OCI-LY7 (cell line): ENCODE measurements at regions of chr12 and their contacts with region 1.

Region 1: DNA sequence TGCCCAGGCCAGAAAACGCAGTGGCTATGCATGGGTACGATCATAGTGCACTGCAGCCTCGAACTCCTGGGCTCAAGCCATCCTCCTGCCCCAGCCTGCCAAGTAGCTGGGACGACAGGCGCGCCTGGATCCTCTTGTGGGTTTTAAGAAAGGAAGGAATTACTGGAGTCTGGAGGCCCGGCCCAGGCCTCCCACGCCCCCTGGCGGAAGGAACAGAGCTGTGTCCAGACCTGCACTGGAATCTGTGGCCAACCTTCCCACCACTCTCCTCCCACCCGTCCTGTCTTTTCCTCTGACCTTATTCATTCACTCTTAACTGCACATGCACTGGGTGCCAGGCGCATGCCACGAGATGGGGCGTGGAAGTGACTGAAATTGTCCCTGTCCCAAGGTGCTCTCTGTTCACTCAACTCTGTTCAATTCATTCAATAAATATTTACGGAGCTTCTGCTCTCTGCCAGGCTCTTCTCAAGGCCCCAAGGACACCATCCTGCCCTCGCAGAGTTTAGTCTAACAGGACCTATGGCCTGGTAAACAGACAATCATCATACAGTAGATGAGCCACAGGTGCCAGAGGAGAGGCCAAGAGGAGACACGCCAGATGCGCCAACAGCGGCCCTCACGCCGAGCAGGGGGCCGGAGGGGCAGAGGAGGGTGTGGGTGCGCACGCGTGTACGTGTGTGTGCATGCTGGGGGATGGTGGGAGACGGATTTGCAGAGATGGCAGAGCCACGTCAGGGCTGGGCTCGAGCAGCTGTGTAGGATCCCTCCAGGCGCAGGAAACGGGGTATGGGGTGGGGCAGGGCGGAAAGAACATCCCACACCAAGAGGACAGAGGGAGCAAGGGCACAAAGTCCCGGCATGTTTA is 13.7 kb upstream of the TMEM106C start:
- DNase-seq: peak; percentile 66
- H3K4me3 ChIP-seq: no peak overlapping the region
- H3K27ac ChIP-seq: no peak overlapping the region
- H3K4me1 ChIP-seq: no peaks in the 10 kb centered on the region
- CTCF ChIP-seq: peak; percentile 95

Region 2: DNA sequence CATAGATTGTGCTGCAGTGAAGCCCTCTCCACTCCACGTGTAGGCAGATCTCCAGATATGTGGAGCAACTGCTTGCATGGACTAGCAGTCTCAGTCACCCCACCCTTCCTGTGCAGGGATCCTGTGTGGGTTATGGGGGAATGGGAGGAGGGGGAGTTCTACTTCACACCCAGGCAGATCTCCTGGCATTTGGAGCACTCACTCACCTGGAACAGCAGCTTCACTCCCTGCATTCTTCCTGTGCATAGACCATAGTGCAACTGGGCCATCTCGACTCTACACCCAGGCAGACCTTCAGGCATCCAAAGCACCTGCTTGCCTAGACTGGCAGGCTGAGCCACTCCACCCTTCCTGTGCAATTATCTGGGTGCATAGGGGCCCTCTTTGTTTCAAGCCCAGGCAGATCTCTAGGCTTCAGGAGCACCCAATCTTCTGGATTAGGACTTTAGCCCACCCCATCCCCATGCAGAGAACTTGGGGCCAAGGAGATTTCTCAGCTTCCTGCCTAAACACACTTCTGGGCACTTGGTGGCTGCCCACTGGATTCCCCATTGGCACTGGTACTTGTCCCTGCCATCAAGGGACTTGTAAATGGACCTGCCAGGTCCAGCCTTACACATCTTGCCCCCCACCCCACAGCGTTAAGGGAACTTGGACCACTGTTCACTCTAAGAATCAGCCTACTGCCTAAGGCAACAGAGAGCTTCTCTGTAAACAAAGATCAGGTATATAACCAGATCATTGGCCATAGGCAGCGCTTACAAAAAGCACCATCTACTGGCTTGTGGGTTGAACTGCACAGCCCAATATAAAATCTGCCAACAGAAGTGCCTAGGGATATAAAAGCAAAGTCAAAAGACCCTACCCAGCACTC is 966.0 kb before region 1 on chr12:
- CTCF ChIA-PET with region 1: no interaction called
- POLR2A ChIA-PET with region 1: no interaction called
- intact Hi-C with region 1: no loop called
- DNase-seq: peak; percentile 49
- H3K4me3 ChIP-seq: no peak overlapping the region
- H3K27ac ChIP-seq: no peak overlapping the region
- H3K4me1 ChIP-seq: no peaks in the 10 kb centered on the region
- CTCF ChIP-seq: peak; percentile 84

Region 3: GRCh38 chr12:47904713-47905310 is 44.9 kb before region 1 on chr12 and contains the start of gene VDR:
- CTCF ChIA-PET with region 1: interaction called, 3 read pairs
- POLR2A ChIA-PET with region 1: no interaction called
- intact Hi-C with region 1: loop called (anchors 2 kb)
- DNase-seq: peak; percentile 69
- H3K4me3 ChIP-seq: peak within 1 kb of the TSS; percentile 71
- H3K27ac ChIP-seq: no peak within 1 kb of the TSS
- H3K4me1 ChIP-seq: peaks cover 15% of the 10 kb centered on the region
- CTCF ChIP-seq: peak; percentile 58
- total RNA-seq, gene VDR: 4.8 and 5.4 TPM in 2 replicates

Region 4: DNA sequence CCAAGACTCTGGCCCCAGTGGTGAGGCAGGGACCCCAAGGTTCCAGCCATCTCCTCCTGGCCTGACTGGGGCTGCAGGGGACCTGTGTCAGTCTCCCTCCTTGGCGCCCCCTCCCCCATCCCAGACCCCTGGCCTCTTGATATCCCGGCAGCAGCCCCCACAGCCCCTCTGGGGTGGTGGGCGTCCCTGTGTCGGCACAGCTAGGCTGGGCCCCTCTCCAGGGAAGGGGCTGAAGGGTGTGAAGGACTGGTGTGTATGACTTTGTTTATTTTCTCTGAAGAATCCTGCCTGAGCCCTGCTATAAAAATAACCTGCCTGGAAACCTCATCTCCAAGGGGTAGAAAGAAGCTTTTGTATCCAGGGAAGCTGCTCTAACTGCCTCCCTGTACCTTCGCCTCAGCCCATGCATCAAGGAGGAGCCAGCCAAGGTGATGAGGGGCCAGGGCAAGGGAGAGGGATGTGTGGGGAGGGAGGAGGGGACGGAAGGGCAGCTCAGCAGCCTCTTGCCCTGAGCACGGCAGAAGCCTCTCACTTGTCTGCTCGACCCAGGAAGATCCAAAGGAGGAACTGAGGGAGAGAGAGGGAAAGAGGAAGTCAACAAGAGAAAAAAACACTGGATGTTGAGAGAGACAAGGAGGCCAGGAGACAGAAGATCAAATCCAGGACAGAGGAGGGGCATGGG is 80.0 kb after region 1 on chr12:
- CTCF ChIA-PET with region 1: no interaction called
- POLR2A ChIA-PET with region 1: no interaction called
- intact Hi-C with region 1: no loop called
- DNase-seq: no peak
- H3K4me3 ChIP-seq: no peak overlapping the region
- H3K27ac ChIP-seq: no peak overlapping the region
- H3K4me1 ChIP-seq: no peaks in the 10 kb centered on the region
- CTCF ChIP-seq: no peak